ENCODE measurements at regions of chr11 and their contacts with region 1.

Region 1: GRCh38 chr11:11520231-11521015 is 101.4 kb downstream of the GALNT18 start:
- DNase-seq: no peak
- H3K4me3 ChIP-seq: no peak overlapping the region
- CTCF ChIP-seq: no peak

Region 2: GRCh38 chr11:11454731-11455140 is 65.7 kb before region 1 on chr11:
- in situ Hi-C with region 1: loop called (anchors 5 kb)
- DNase-seq: no peak
- H3K4me3 ChIP-seq: no peak overlapping the region
- CTCF ChIP-seq: no peak

Region 3: GRCh38 chr11:11584446-11584810 is 64.0 kb after region 1 on chr11:
- in situ Hi-C with region 1: loop called (anchors 5 kb)
- DNase-seq: peak; percentile 47
- H3K4me3 ChIP-seq: no peak overlapping the region
- CTCF ChIP-seq: no peak

Region 4: DNA sequence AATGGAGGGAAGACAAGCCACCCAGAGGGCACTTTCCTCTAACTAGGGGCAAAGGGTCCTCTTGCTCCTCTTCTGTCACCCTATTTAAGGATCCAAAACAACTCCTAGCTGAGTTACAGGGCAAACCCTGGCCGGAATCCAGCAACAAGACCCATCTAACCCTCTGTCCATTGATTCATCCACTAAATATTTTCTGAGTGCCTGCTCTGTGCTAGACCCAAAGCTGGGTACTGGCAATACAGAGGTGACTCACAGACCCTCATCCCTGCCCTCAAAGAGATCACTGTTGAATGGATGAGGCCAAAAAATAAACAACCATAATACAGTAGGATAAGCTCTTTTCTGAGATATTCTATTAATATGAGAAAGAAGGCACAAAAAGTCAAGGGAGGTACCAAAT is 105.7 kb after region 1 on chr11:
- in situ Hi-C with region 1: loop called (anchors 5 kb)
- DNase-seq: no peak
- H3K4me3 ChIP-seq: no peak overlapping the region
- CTCF ChIP-seq: no peak